Ascending aorta (tissue), 2 donors: ENCODE measurements at regions of chr9 and their contacts with region 1.

Region 1: DNA sequence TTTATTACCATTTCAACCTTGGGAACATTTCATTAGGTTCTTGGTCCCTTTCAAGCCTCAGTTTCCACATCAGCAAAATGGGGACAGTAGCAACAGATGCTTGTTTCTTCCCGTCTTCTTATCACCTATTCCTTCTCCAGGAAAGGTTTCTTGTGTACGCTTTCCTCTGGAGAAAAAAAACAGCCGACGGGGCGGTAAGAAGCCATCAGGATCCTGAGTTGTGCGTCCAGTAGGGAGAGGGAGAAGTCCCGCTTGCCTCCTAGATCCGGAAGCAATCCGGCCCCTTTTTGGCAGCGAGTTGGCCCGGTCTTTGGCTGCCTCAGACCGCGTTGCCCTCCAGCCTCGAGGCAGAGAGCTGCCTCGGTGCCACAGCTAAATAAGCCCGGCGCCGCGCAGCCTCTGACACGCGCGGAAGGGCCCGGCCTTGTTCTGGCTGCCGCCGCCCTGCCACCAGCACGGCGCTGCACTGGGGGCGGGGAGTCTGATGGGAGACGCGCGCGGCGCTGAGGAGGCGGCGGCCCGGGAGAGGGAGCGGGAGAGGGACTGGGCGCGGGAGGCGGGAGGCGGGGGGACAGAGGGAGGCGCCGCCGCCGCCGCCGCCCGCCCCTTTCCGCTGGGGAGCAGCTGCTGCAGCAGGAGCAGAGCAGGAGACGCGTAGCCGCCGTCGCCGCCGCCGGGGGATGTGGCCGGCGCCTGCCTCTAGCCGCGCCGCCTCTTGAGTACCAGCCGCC is at the start of gene SLC44A1:
- DNase-seq: peak; percentile 89 to 98
- H3K4me3 ChIP-seq: peak within 1 kb of the TSS; percentile 96 to 97
- H3K27ac ChIP-seq: peak within 1 kb of the TSS; percentile 78 to 88
- H3K4me1 ChIP-seq: peaks cover 14 to 25% of the 10 kb centered on the region in 2 donors
- H3K27me3 ChIP-seq: no peaks in the 10 kb centered on the region
- CTCF ChIP-seq: no peak
- total RNA-seq, gene SLC44A1: 26.5 TPM

Region 2: GRCh38 chr9:104765138-104765537 is 479.0 kb before region 1 on chr9:
- intact Hi-C with region 1: loop called (anchors 5 kb)
- DNase-seq: no peak
- H3K4me3 ChIP-seq: peak overlapping the region in 1 of 2 donors; percentile 79
- H3K27ac ChIP-seq: no peak overlapping the region
- H3K4me1 ChIP-seq: peaks cover 0 to 6% of the 10 kb centered on the region in 2 donors
- H3K27me3 ChIP-seq: no peaks in the 10 kb centered on the region
- CTCF ChIP-seq: no peak

Region 3: DNA sequence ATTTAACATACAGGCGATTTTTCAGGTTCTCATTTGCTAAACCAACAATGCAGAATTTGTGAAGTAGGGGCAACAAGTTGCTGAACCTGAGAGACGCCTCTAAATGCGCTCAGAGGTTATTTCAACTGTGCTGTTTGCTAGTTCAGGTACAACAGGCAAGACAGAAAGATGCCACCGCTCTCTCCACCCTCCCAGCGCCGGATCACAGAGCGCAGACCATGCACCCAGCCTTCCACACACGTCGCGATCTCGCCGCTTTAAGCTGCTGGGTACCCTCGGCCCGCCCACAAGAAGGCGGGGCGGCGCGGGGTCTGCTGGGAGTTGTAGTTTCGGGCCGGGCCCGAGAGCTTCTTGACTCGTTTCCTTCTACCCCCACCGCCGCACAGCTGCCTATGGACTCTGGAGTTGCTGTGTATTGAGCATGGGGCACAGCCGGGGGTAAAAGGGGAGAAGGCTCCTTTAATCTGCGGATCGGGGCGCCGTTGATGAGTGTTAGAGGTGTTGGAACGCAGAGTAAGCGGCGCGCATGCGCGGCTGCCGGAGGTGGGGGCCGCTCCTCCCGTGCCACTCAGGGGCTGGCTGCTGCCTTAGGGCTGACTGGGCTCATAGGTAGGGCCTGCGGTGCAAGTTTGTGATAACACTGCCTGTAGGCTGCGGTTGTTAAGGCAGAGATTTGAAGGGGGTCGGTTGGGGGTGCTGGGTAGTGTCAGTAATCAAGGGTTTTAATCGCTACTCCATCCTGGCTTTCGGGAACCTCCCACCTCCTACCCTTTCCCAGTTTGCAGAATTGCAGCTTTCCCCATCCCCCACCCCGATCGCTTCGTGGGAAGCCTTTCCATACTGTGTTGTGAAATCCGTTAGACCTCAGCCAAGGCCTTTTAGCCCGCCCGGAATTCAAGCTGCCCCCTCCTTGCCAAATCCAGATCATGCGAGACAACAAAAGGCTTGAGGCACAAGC is 275.9 kb before region 1 on chr9:
- intact Hi-C with region 1: loop called (anchors 1 kb)
- DNase-seq: peak; percentile 41 to 95
- H3K4me3 ChIP-seq: peak overlapping the region; percentile 69 to 78
- H3K27ac ChIP-seq: peak overlapping the region; percentile 86 to 94
- H3K4me1 ChIP-seq: peaks cover 0 to 4% of the 10 kb centered on the region in 2 donors
- H3K27me3 ChIP-seq: no peaks in the 10 kb centered on the region
- CTCF ChIP-seq: no peak

Region 4: DNA sequence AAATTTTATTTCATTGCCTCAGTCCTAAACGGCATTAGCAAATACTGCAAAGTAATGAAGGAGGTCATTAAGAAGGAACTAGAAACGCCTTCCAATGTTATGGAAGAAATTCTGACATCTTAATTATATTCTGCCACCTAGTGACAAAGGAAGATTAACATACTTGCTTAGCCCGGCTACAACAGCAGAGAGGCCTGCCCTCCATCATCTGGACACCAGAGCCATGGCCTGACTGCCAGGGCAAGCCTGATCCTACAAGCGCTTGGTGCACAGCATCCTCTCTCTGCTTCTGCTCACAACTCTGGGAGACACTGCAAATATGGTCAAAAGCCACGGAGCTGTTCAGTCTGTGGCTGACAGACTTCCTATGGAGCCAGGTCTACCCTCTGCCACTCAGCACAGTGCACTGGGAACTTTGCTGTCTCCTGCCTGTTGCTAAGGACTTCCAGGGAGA is 87.0 kb before region 1 on chr9:
- intact Hi-C with region 1: loop called (anchors 5 kb)
- DNase-seq: peak in 1 of 2 donors; percentile 74
- H3K4me3 ChIP-seq: no peak overlapping the region
- H3K27ac ChIP-seq: no peak overlapping the region
- H3K4me1 ChIP-seq: no peaks in the 10 kb centered on the region
- H3K27me3 ChIP-seq: no peaks in the 10 kb centered on the region
- CTCF ChIP-seq: peak; percentile 21 to 50 (median 27)

Region 5: DNA sequence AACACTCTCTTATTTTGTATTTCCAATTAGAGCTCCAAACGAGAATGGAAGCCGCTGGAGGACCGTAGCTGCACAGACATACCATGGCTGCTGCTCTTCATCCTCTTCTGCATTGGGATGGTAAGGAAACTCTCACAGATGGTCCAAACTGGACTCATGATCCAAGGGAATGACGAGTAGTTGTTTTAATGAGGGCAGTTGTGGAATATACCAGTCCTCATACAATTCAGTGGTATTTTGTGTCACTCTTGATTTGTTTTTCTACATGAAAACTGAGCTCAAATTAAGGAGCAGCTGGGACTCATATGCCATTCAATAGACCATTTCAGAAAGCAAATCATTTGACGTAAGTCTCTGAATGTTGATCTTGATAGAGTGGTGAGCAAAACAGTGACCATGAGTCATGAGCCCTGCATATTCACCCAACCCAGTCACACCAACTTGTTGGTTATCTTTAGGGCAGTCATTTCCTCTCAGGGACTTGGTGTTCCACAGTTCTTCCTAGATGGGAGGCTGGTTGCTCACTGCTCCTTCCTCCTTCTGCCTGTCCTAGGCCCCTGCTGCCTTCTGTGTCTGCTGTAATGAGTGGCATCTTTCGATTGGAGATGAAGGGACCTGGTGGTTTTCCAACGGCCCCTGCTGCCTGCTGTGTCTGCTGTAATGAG is 55.2 kb after region 1 on chr9:
- intact Hi-C with region 1: loop called (anchors 2 kb)
- DNase-seq: peak; percentile 13 to 71
- H3K4me3 ChIP-seq: no peak overlapping the region
- H3K27ac ChIP-seq: peak overlapping the region; percentile 76 to 79
- H3K4me1 ChIP-seq: peaks cover 9 to 30% of the 10 kb centered on the region in 2 donors
- H3K27me3 ChIP-seq: no peaks in the 10 kb centered on the region
- CTCF ChIP-seq: no peak

Region 6: GRCh38 chr9:105385381-105385985 is 141.3 kb after region 1 on chr9:
- intact Hi-C with region 1: no loop called
- DNase-seq: no peak
- H3K4me3 ChIP-seq: no peak overlapping the region
- H3K27ac ChIP-seq: no peak overlapping the region
- H3K4me1 ChIP-seq: no peaks in the 10 kb centered on the region
- H3K27me3 ChIP-seq: no peaks in the 10 kb centered on the region
- CTCF ChIP-seq: no peak